Ascending aorta (tissue), 2 donors: ENCODE measurements at regions of chr6 and their contacts with region 1.

Region 1: GRCh38 chr6:157823001-157823527 is at the start of gene SNX9:
- DNase-seq: peak in 1 of 2 donors; percentile 89
- H3K4me3 ChIP-seq: peak within 1 kb of the TSS; percentile 90 to 98
- H3K27ac ChIP-seq: peak within 1 kb of the TSS; percentile 98 to 100
- H3K4me1 ChIP-seq: peaks cover 4 to 20% of the 10 kb centered on the region in 2 donors
- H3K27me3 ChIP-seq: no peaks in the 10 kb centered on the region
- CTCF ChIP-seq: peak in 1 of 3 experiments; percentile 28
- total RNA-seq, gene SNX9: 55.2 TPM

Region 2: GRCh38 chr6:157314705-157315321 is 508.3 kb before region 1 on chr6:
- intact Hi-C with region 1: no loop called
- DNase-seq: no peak
- H3K4me3 ChIP-seq: no peak overlapping the region
- H3K27ac ChIP-seq: no peak overlapping the region
- H3K4me1 ChIP-seq: peaks cover 0 to 4% of the 10 kb centered on the region in 2 donors
- H3K27me3 ChIP-seq: no peaks in the 10 kb centered on the region
- CTCF ChIP-seq: peak; percentile 63 to 84 (median 83)

Region 3: GRCh38 chr6:157756708-157757429 is 66.2 kb before region 1 on chr6:
- intact Hi-C with region 1: loop called (anchors 2 kb)
- DNase-seq: peak; percentile 47 to 95
- H3K4me3 ChIP-seq: peak overlapping the region in 1 of 2 donors; percentile 32
- H3K27ac ChIP-seq: peak overlapping the region; percentile 62 to 71
- H3K4me1 ChIP-seq: peaks cover 13 to 27% of the 10 kb centered on the region in 2 donors
- H3K27me3 ChIP-seq: no peaks in the 10 kb centered on the region
- CTCF ChIP-seq: peak; percentile 76 to 90 (median 89)

Region 4: GRCh38 chr6:157861814-157862213 is 38.8 kb after region 1 on chr6:
- intact Hi-C with region 1: no loop called
- DNase-seq: no peak
- H3K4me3 ChIP-seq: no peak overlapping the region
- H3K27ac ChIP-seq: no peak overlapping the region
- H3K4me1 ChIP-seq: peaks cover 0 to 23% of the 10 kb centered on the region in 2 donors
- H3K27me3 ChIP-seq: no peaks in the 10 kb centered on the region
- CTCF ChIP-seq: no peak